Gastrocnemius medialis (tissue), 4 donors: ENCODE measurements at regions of chr11 and their contacts with region 1.

Region 1: DNA sequence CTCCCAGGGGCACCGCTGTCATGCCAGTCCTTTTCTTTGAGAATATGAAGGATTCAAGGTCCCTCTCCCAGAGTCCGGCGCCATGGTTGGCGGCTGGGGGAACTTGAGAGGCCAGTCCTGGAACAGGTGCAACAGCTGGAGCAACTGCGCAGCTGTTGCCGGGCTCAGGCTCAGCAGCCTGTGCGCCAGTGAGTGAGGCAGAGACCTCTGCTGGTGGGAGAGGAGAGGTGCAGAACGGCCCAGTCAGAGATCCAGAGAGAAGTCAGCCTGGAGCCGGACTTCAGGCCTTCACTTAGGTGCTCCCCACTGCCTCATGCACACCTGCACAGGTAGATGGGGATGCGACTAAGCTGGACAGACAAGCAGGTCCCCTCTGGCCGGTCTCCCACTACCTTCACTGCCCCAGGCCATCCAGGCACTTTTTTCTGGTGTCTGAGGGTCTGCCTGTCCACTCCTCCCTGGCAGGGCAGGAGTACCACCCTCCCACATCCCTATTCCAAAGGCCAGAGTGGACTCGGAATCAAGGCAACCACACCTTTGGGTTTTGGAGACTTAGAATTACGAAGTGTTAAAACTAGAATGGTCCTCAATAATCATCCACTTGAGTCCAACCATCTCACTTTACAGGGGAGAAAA is 4.6 kb downstream of the CHRDL2 start:
- DNase-seq: peak; percentile 79 to 89
- ATAC-seq: peak; percentile 92 to 98
- H3K4me3 ChIP-seq: no peak overlapping the region
- H3K27ac ChIP-seq: peak overlapping the region; percentile 7 to 63 (median 42)
- H3K4me1 ChIP-seq: peaks cover 3% of the 10 kb centered on the region in 2 donors
- H3K27me3 ChIP-seq: peaks cover 8 to 16% (median 10%) of the 10 kb centered on the region in 3 donors
- CTCF ChIP-seq: peak; percentile 93 to 98 (median 95)
- POLR2A ChIP-seq: no peak

Region 2: DNA sequence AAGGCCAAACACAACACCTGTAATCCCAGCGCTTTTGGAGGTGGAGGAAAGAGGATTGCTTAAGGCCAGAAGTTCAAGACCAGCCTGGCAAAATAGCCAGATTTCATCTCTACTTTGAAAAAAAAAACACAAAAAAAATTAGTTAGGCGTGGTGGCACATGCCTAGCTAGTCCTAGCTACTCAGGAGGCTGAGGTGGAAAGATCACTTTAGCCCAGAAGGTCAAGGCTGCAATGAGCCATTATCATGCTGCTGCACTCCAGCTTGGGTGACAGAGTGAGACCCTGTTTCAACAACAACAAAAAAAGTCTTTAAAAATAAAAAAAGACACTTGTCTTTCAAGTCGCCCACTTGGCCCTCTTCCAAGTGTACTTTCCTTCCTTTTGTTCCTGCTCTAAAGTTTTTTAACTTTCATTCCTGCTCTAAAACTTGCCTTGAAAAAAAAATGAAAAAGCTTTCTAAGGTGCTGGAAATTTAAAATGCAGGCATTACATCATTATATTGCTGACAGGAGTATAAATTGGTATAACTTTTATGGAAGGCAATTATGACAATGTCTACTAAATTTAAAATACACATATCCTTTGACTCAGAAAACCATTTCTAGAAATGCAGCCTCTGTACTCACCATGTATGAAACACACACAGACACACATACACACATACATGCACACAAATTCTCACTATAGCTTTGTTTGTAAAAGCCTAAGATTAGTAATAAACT is 245.8 kb before region 1 on chr11:
- in situ Hi-C with region 1: no loop called
- intact Hi-C with region 1: no loop called
- DNase-seq: no peak
- ATAC-seq: no peak
- H3K4me3 ChIP-seq: no peak overlapping the region
- H3K27ac ChIP-seq: no peak overlapping the region
- H3K4me1 ChIP-seq: no peaks in the 10 kb centered on the region
- H3K27me3 ChIP-seq: no peaks in the 10 kb centered on the region
- CTCF ChIP-seq: no peak
- POLR2A ChIP-seq: no peak

Region 3: DNA sequence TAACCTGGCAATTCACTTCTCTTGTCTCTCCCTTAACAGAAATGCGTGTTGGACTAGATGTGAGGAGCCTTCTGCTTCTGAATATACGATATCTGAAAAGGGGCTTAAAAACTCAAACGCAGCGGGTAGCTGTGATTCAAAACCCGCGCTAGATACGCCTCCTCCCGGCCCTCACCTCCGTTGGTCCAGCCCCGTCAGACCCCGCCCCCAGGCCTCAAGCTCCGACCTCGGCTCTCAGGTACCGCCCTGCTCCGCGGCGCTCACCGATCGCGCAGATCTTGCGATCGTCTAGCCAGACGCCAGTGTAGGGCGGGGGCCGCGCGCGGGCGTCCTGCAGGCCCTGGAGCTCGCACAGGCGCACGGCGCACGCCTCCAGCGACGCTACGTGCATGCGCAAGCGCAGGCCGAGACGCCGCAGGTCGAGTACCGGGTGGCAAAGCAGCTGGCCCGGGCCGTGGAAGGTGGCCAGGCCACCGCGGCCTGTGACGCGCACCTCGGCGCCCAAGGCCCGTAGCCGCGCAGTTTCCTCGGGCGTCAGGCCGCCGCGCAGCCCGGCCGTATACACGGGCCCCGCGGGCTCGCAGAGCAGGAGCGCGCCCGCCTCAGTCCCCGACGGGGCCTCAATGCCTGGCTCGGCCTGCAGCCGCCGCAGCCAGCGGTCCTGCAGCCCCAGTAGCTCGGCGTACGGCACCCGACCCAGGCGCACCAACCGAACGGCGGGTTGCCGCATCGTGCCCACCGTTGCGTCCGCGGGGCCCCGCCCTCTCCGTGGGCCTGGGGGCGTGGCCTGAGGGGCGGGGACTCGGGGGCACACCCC is 233.5 kb before region 1 on chr11 and contains the start of gene LIPT2:
- in situ Hi-C with region 1: no loop called
- intact Hi-C with region 1: loop called (anchors 10 kb)
- DNase-seq: peak; percentile 94 to 97
- ATAC-seq: peak; percentile 90 to 92
- H3K4me3 ChIP-seq: peak within 1 kb of the TSS; percentile 66 to 96 (median 78)
- H3K27ac ChIP-seq: peak within 1 kb of the TSS; percentile 86 to 100 (median 96)
- H3K4me1 ChIP-seq: peaks cover 20% of the 10 kb centered on the region in 2 donors
- H3K27me3 ChIP-seq: no peaks in the 10 kb centered on the region
- CTCF ChIP-seq: no peak
- POLR2A ChIP-seq: peak; percentile 76 to 87
- total RNA-seq, gene LIPT2: 3.5 to 11.2 (median 8.3) TPM

Region 4: DNA sequence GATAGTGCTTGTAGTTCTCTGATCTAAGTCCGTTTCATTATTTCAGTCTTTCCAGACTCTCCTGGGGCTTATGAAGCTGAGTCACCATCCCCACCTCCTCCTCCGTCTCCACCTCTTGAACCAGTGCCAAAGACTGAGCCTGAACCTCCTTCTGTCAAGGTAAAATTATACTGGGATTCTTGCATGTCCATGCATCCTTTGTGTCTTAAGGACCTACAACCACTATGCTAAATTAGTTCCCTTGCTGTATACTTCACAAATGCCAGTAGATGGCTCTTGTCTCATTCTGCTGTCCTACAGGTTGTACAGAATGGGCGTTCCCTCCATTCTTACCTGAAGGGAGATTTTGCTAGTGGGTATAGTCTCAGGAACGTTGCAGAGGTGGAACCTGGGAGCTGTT is 92.1 kb before region 1 on chr11:
- in situ Hi-C with region 1: no loop called
- intact Hi-C with region 1: loop called (anchors 1 kb)
- DNase-seq: no peak
- ATAC-seq: peak; percentile 75 to 81
- H3K4me3 ChIP-seq: no peak overlapping the region
- H3K27ac ChIP-seq: no peak overlapping the region
- H3K4me1 ChIP-seq: no peaks in the 10 kb centered on the region
- H3K27me3 ChIP-seq: no peaks in the 10 kb centered on the region
- CTCF ChIP-seq: peak in 1 of 5 experiments; percentile 10
- POLR2A ChIP-seq: no peak

Region 5: DNA sequence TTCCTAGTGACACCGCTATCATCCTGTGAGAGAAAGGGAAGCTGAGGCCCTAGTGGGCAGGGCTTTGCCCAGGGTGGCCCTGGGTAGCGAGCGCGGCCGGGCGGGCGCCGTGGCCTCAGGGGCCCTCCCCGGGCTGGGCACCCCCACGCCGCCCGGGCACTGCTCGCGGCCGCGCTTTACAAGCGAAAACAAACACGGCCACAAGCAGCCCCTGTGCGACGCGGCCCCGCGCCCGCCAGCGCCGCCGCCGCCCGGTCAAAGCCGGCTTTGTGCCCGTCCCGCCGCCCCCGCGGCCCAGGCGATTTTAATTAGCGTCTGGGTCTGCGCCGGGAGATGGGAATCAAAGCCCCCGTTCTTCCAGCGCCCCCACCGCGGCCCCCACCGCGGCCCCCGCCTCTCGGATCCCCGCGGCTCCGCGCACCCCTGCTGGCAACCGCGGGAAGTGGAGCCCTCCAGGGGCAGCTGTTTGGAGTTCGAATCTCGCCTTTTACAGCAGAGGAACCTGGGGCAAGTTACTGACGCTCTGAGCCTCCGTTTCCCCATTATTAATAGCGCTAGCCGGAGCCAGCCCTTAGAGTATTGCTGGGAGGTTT is 43.3 kb before region 1 on chr11:
- in situ Hi-C with region 1: no loop called
- intact Hi-C with region 1: loop called (anchors 5 kb)
- DNase-seq: no peak
- ATAC-seq: peak in 1 of 2 donors; percentile 32
- H3K4me3 ChIP-seq: peak overlapping the region; percentile 44 to 65 (median 55)
- H3K27ac ChIP-seq: peak overlapping the region in 2 of 4 donors; percentile 62 to 66
- H3K4me1 ChIP-seq: peaks cover 11 to 13% of the 10 kb centered on the region in 2 donors
- H3K27me3 ChIP-seq: no peaks in the 10 kb centered on the region
- CTCF ChIP-seq: peak in 4 of 5 experiments; percentile 32 to 54 (median 49)
- POLR2A ChIP-seq: no peak

Region 6: DNA sequence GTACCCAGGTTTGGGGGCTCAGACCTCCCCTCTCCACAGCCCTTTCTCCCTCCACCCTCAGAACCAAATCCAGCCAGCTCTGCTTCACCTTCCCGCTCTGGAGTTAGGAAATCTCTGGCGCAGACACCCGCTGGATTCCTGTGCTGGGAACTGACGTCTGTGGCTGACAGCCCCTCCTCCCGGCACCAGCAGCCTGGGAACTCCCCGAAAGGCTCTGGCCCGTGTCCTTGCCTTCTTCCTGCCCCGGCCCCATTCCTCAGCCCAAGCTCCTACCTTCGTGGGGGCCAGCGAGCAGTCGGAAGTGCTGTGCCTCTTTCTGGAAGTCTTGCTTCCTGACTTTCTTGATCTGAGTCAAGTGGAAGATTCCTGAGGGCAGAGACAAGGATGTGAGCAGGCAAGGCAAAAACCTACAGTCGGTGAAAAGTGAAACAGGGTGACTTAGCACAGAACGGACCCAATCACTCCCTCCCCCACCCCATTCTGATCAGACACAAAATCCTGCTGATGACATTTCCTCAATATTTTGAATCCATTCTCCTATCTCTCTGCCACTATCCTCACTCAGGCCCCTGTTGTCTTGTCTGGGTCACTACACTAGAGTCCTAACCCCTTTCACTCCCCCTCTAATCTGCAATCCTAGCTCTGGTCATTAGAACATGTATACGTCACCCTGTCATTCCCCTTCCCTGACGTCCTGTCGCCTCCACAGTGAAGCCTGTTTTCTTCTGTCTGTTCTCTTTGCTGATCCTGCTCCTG is 29.6 kb before region 1 on chr11:
- in situ Hi-C with region 1: no loop called
- intact Hi-C with region 1: loop called (anchors 1 kb)
- DNase-seq: peak; percentile 31 to 70
- ATAC-seq: peak; percentile 75 to 86
- H3K4me3 ChIP-seq: peak overlapping the region; percentile 21 to 45 (median 28)
- H3K27ac ChIP-seq: peak overlapping the region; percentile 70 to 74 (median 72)
- H3K4me1 ChIP-seq: peaks cover 14 to 17% of the 10 kb centered on the region in 2 donors
- H3K27me3 ChIP-seq: no peaks in the 10 kb centered on the region
- CTCF ChIP-seq: no peak
- POLR2A ChIP-seq: peak in 1 of 2 donors; percentile 27

Region 7: GRCh38 chr11:74702383-74703007 is 24.2 kb before region 1 on chr11:
- in situ Hi-C with region 1: no loop called
- intact Hi-C with region 1: loop called (anchors 1 kb)
- DNase-seq: peak; percentile 35 to 60
- ATAC-seq: peak; percentile 81 to 92
- H3K4me3 ChIP-seq: no peak overlapping the region
- H3K27ac ChIP-seq: no peak overlapping the region
- H3K4me1 ChIP-seq: peaks cover 0 to 2% of the 10 kb centered on the region in 2 donors
- H3K27me3 ChIP-seq: no peaks in the 10 kb centered on the region
- CTCF ChIP-seq: peak; percentile 53 to 87 (median 82)
- POLR2A ChIP-seq: no peak